ENCODE measurements at regions of chr19 and their contacts with region 1.

Region 1: DNA sequence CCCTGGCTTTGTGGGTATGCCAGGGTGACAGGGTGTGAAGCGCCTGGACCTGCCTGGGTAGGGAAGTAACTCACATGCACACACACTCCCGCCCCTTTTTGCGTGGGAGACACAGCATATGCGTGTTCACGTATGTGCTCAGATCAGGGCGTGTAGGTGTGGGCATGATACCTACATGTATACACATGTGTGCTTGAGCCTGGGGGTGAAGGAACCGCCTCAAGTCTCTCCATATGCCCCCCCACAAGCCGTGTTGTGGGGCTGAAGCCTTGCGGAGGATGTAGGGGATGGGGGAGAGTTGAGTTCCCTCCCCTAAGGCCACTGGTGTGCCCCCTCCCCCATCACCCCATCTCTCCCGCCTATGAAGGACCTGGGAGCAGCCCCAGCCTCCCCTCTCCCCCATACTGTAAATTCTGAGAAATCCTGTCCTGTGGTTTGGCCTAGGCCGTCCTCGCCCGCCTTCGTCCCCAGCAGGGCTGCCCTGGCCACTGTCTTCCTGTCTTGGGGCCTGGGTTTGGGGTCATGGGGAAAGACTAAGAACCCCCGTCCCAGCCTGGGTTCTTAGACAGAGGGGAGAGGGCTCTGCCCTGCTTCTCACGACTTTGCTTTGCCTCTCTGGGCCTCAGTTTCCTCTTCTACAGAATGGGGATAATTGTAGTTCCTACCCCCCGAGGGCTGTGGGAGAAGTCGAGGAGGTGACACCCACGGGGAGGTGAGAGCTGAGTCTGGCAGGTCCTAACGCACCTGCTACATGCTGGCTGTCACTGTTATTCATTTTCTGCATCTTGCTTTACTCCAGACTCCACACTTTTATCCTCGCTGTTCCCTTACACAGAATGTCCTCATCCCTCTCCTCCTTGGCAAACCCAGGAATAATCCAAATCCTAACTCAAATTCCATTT is 14.3 kb downstream of the ACTL9 start:
- DNase-seq: no peak
- ATAC-seq: no peak
- H3K4me3 ChIP-seq: no peak overlapping the region
- H3K4me3 Mint-ChIP-seq: no peak overlapping the region
- H3K27ac ChIP-seq: no peak overlapping the region
- H3K27ac Mint-ChIP-seq: no peak overlapping the region
- H3K4me1 ChIP-seq: no peaks in the 10 kb centered on the region
- H3K4me1 Mint-ChIP-seq: peaks cover 2% of the 10 kb centered on the region
- H3K27me3 ChIP-seq: no peaks in the 10 kb centered on the region
- H3K27me3 Mint-ChIP-seq: peaks cover 1% of the 10 kb centered on the region
- CTCF ChIP-seq: no peak

Region 2: GRCh38 chr19:8697671-8698432 is 13.6 kb after region 1 on chr19:
- CTCF ChIA-PET with region 1: interaction called, 11 read pairs
- POLR2A ChIA-PET with region 1: no interaction called
- intact Hi-C with region 1: no loop called
- DNase-seq: peak in 2 of 9 experiments; percentile 22 to 35
- ATAC-seq: no peak
- H3K4me3 ChIP-seq: no peak overlapping the region
- H3K4me3 Mint-ChIP-seq: no peak overlapping the region
- H3K27ac ChIP-seq: no peak overlapping the region
- H3K27ac Mint-ChIP-seq: no peak overlapping the region
- H3K4me1 ChIP-seq: peaks cover 25% of the 10 kb centered on the region
- H3K4me1 Mint-ChIP-seq: peaks cover 29% of the 10 kb centered on the region
- H3K27me3 ChIP-seq: no peaks in the 10 kb centered on the region
- H3K27me3 Mint-ChIP-seq: no peaks in the 10 kb centered on the region
- CTCF ChIP-seq: no peak

Region 3: DNA sequence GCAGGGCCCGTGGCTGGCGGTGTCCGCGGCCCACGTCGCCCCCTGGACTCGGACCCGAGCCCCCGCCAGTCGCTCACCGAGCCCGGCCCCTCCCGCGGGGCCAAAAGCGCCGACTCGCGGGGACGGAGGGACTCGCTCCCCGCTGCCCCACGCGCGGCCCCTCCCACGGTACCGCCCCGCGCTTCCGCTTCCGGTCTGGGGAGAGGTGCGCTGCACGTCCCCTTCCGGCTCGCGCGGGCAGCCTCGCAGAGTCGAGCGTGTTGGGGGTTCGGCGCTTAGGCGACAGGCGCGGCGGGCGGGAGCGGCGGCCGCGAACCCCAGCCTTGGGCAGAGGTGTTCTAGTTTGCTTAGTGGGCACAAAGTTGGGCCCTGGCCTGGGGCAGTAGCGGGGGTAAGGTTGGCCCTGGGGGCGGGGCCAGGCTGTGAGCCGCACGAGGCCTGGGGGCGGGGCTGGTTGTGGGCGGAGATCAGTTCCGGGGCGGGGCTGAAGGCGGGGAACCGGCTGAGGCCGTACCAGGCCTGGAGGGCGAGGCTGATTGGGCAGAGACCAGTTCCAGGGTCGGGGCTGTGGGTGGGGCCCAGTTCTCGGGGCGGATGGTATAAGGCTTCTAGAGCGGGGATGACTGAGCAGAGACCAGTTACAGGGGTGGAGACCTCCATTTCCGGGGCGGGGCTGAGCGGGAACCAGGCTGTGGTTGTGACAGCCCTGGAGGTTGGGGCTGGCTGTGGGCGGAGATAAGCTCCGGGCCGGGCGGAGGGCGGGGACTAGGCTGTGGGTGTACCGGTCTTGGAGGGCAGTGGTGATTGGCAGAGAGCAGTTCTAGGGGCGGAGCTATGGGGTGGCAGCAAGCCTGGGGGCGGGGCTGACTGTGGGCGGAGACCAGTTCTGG is 148.1 kb after region 1 on chr19 and contains the starts of genes MBD3L1 and ZNF558:
- CTCF ChIA-PET with region 1: no interaction called
- POLR2A ChIA-PET with region 1: no interaction called
- intact Hi-C with region 1: no loop called
- DNase-seq: peak; percentile 97 to 100 (median 99)
- ATAC-seq: peak; percentile 89
- H3K4me3 ChIP-seq: peak within 1 kb of the TSS; percentile 86 to 93
- H3K4me3 Mint-ChIP-seq: peak within 1 kb of the TSS; percentile 92
- H3K27ac ChIP-seq: peak within 1 kb of the TSS; percentile 91
- H3K27ac Mint-ChIP-seq: peak within 1 kb of the TSS; percentile 96
- H3K4me1 ChIP-seq: peaks cover 13% of the 10 kb centered on the region
- H3K4me1 Mint-ChIP-seq: peaks cover 27% of the 10 kb centered on the region
- H3K27me3 ChIP-seq: no peaks in the 10 kb centered on the region
- H3K27me3 Mint-ChIP-seq: no peaks in the 10 kb centered on the region
- CTCF ChIP-seq: no peak
- total RNA-seq, gene MBD3L1: not detected
- total RNA-seq, gene ZNF558: 28.1 to 32.9 TPM